Activated B cell treated with CpG ODN at 0.5 μM for 24 hours (primary cell): ENCODE measurements at regions of chrX and their contacts with region 1.

Region 1: GRCh38 chrX:119791438-119792231 is at the start of gene RPL39:
- DNase-seq: peak; percentile 69
- ATAC-seq: peak; percentile 90
- H3K4me3 Mint-ChIP-seq: peak within 1 kb of the TSS; percentile 95
- H3K27ac Mint-ChIP-seq: peak within 1 kb of the TSS; percentile 96
- H3K4me1 Mint-ChIP-seq: peaks cover 37% of the 10 kb centered on the region
- H3K27me3 Mint-ChIP-seq: no peaks in the 10 kb centered on the region
- CTCF ChIP-seq: no peak
- total RNA-seq, gene RPL39: 3,684 and 4,270 TPM in 2 replicates

Region 2: GRCh38 chrX:119235872-119236622 is 555.6 kb before region 1 on chrX and contains the start of gene PGRMC1:
- CTCF ChIA-PET with region 1: no interaction called
- POLR2A ChIA-PET with region 1: no interaction called
- intact Hi-C with region 1: no loop called
- DNase-seq: peak; percentile 64
- ATAC-seq: peak; percentile 97
- H3K4me3 Mint-ChIP-seq: peak within 1 kb of the TSS; percentile 89
- H3K27ac Mint-ChIP-seq: peak within 1 kb of the TSS; percentile 82
- H3K4me1 Mint-ChIP-seq: peaks cover 16% of the 10 kb centered on the region
- H3K27me3 Mint-ChIP-seq: no peaks in the 10 kb centered on the region
- CTCF ChIP-seq: no peak
- total RNA-seq, gene PGRMC1: 8.5 and 9.8 TPM in 2 replicates

Region 3: GRCh38 chrX:119391279-119391678 is 400.4 kb before region 1 on chrX:
- CTCF ChIA-PET with region 1: no interaction called
- POLR2A ChIA-PET with region 1: no interaction called
- intact Hi-C with region 1: no loop called
- DNase-seq: no peak
- ATAC-seq: no peak
- H3K4me3 Mint-ChIP-seq: no peak overlapping the region
- H3K27ac Mint-ChIP-seq: no peak overlapping the region
- H3K4me1 Mint-ChIP-seq: no peaks in the 10 kb centered on the region
- H3K27me3 Mint-ChIP-seq: no peaks in the 10 kb centered on the region
- CTCF ChIP-seq: no peak

Region 4: GRCh38 chrX:119574394-119575266 is 217.0 kb before region 1 on chrX and contains the start of gene UBE2A:
- CTCF ChIA-PET with region 1: no interaction called
- POLR2A ChIA-PET with region 1: interaction called, 20 read pairs
- intact Hi-C with region 1: no loop called
- DNase-seq: peak; percentile 78
- ATAC-seq: peak; percentile 94
- H3K4me3 Mint-ChIP-seq: peak within 1 kb of the TSS; percentile 93
- H3K27ac Mint-ChIP-seq: peak within 1 kb of the TSS; percentile 91
- H3K4me1 Mint-ChIP-seq: peaks cover 38% of the 10 kb centered on the region
- H3K27me3 Mint-ChIP-seq: no peaks in the 10 kb centered on the region
- CTCF ChIP-seq: no peak
- total RNA-seq, gene UBE2A: 65.9 and 73.5 TPM in 2 replicates

Region 5: DNA sequence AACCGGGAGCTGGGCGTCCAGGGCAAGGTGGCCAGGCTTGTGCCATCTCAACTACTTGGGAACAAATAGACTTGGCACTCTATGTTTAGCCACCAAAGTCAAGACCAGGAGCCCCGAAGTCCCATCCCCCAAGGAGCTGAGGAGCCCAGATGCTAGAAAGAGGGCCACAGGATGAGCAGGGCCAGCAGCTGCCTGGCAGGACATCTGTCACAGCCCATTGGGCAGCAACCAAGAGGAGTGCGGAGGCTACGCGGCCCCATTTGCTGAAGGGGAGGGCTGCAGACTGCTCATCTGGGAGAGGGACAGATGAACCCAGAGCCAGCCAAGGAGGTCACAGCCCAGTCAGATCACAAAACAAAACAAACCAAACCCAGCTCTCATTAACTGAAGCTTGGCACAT is 56.2 kb before region 1 on chrX:
- CTCF ChIA-PET with region 1: no interaction called
- POLR2A ChIA-PET with region 1: no interaction called
- intact Hi-C with region 1: no loop called
- DNase-seq: no peak
- ATAC-seq: no peak
- H3K4me3 Mint-ChIP-seq: no peak overlapping the region
- H3K27ac Mint-ChIP-seq: no peak overlapping the region
- H3K4me1 Mint-ChIP-seq: no peaks in the 10 kb centered on the region
- H3K27me3 Mint-ChIP-seq: no peaks in the 10 kb centered on the region
- CTCF ChIP-seq: no peak

Region 6: GRCh38 chrX:119753571-119754257 is 37.9 kb before region 1 on chrX:
- CTCF ChIA-PET with region 1: interaction called, 6 read pairs
- POLR2A ChIA-PET with region 1: interaction called, 25 read pairs
- intact Hi-C with region 1: loop called (anchors 1 kb)
- DNase-seq: no peak
- ATAC-seq: peak; percentile 5
- H3K4me3 Mint-ChIP-seq: peak overlapping the region; percentile 50
- H3K27ac Mint-ChIP-seq: peak overlapping the region; percentile 98
- H3K4me1 Mint-ChIP-seq: peaks cover 44% of the 10 kb centered on the region
- H3K27me3 Mint-ChIP-seq: no peaks in the 10 kb centered on the region
- CTCF ChIP-seq: no peak

Region 7: DNA sequence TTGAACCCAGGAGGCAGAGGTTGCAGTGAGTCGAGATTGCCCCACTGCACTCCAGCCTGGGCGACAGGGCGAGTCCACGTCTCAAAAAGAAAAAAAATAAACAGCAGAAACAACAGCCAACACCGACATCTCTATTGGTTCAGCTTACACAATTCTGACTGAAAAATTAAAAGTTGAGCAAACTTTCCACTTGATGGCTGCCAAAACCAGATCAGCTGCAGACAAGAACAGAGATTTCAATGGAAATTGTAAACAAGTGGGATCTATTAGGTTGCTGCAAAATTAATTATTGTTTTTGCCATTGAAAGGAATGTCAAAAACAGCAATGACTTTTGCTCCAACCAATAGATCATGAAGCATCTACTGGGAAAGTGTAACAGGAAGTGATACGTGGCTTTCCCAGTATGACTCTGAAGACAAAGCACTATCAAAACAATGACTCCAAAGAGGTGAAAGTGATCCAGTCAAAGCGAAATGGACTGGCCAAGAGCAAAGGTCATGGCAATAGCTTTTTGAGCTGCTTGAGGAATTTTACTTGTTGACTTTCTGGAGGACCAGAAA is 34.8 kb after region 1 on chrX:
- CTCF ChIA-PET with region 1: no interaction called
- POLR2A ChIA-PET with region 1: interaction called, 5 read pairs
- intact Hi-C with region 1: loop called (anchors 5 kb)
- DNase-seq: no peak
- ATAC-seq: no peak
- H3K4me3 Mint-ChIP-seq: no peak overlapping the region
- H3K27ac Mint-ChIP-seq: no peak overlapping the region
- H3K4me1 Mint-ChIP-seq: peaks cover 10% of the 10 kb centered on the region
- H3K27me3 Mint-ChIP-seq: no peaks in the 10 kb centered on the region
- CTCF ChIP-seq: no peak

Region 8: GRCh38 chrX:119871599-119872395 is 80.2 kb after region 1 on chrX and contains the starts of genes NDUFA1 and RNF113A:
- CTCF ChIA-PET with region 1: no interaction called
- POLR2A ChIA-PET with region 1: interaction called, 41 read pairs
- intact Hi-C with region 1: loop called (anchors 1 kb)
- DNase-seq: peak; percentile 75
- ATAC-seq: peak; percentile 92
- H3K4me3 Mint-ChIP-seq: peak within 1 kb of the TSS; percentile 96
- H3K27ac Mint-ChIP-seq: peak within 1 kb of the TSS; percentile 98
- H3K4me1 Mint-ChIP-seq: peaks cover 23% of the 10 kb centered on the region
- H3K27me3 Mint-ChIP-seq: no peaks in the 10 kb centered on the region
- CTCF ChIP-seq: no peak
- total RNA-seq, gene NDUFA1: 65.3 and 88.0 TPM in 2 replicates
- total RNA-seq, gene RNF113A: 27.1 and 28.1 TPM in 2 replicates

Region 9: DNA sequence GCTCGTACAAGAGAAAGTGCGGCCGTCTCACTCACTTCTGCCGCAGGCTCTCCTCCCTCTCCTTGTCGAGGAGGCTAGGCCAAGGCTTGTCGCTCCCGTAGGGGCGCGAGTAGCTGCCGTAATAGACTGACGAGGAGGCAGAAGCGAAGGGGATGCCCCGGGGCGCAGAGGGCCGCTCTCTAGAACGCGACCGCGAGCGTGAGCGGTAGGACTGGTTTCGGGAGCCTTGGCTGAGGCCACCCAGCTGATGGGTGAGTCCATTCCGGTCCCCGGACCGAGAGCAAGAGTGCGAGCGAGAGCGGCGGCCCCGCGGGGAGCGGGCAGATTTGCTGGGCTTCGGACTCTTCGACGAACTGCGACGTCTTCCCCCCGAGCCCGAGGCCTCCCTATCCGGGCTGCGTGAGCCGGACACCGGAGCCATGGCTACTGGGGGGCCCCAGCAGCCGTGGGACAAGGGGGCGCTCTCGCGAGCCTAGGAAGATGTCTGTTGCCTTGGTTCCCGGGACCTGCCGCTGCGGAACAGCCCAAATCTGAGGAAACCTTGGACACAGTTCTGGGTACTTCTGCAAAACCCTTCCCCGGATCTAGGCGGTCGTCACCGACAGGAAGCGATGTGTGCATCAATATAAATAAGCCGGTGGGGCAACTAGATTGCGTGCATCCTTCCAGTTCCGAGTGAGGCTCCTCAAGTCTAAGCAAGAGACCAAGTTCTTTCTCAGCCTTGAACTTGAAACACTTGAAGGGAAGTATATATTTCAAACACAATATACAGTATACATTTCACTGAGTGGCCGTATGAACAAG is 151.8 kb after region 1 on chrX and contains the start of gene NKAP:
- CTCF ChIA-PET with region 1: no interaction called
- POLR2A ChIA-PET with region 1: interaction called, 8 read pairs
- intact Hi-C with region 1: loop called (anchors 1 kb)
- DNase-seq: peak; percentile 70
- ATAC-seq: peak; percentile 85
- H3K4me3 Mint-ChIP-seq: peak within 1 kb of the TSS; percentile 84
- H3K27ac Mint-ChIP-seq: peak within 1 kb of the TSS; percentile 86
- H3K4me1 Mint-ChIP-seq: peaks cover 23% of the 10 kb centered on the region
- H3K27me3 Mint-ChIP-seq: peaks cover 2% of the 10 kb centered on the region
- CTCF ChIP-seq: no peak
- total RNA-seq, gene NKAP: 11.6 and 11.9 TPM in 2 replicates

Region 10: DNA sequence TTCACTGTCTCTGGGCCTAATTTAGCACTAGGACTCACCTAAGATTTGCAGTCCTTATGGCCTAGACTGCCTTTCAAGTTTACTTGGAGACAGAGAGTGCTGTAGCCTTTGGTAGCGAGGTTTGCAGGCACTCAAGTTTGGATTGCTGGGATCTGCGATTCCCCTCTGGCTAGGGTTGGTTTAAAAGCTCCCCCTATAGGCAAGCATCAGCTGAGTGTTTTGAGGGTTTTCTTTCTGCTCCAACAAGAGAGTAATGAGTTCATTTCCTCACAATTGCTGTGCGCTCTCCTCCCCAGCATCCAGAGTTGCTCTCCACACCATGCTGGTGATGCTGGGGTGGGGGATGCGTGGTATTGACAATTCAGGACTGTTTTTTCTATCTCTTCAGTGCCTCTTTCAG is 1462.7 kb after region 1 on chrX:
- CTCF ChIA-PET with region 1: no interaction called
- POLR2A ChIA-PET with region 1: no interaction called
- intact Hi-C with region 1: no loop called
- DNase-seq: no peak
- ATAC-seq: no peak
- H3K4me3 Mint-ChIP-seq: no peak overlapping the region
- H3K27ac Mint-ChIP-seq: no peak overlapping the region
- H3K4me1 Mint-ChIP-seq: no peaks in the 10 kb centered on the region
- H3K27me3 Mint-ChIP-seq: peaks cover 3% of the 10 kb centered on the region
- CTCF ChIP-seq: no peak